HCT116 (cell line): ENCODE measurements at regions of chr17 and their contacts with region 1.

Region 1: GRCh38 chr17:68719431-68719830 is 118.3 kb upstream of the FAM20A start:
- DNase-seq: no peak
- ATAC-seq: no peak
- H3K4me3 ChIP-seq: no peak overlapping the region
- H3K27ac ChIP-seq: no peak overlapping the region
- H3K4me1 ChIP-seq: no peaks in the 10 kb centered on the region
- H3K27me3 ChIP-seq: no peaks in the 10 kb centered on the region
- CTCF ChIP-seq: no peak
- POLR2A ChIP-seq: no peak
- RAD21 ChIP-seq: no peak

Region 2: DNA sequence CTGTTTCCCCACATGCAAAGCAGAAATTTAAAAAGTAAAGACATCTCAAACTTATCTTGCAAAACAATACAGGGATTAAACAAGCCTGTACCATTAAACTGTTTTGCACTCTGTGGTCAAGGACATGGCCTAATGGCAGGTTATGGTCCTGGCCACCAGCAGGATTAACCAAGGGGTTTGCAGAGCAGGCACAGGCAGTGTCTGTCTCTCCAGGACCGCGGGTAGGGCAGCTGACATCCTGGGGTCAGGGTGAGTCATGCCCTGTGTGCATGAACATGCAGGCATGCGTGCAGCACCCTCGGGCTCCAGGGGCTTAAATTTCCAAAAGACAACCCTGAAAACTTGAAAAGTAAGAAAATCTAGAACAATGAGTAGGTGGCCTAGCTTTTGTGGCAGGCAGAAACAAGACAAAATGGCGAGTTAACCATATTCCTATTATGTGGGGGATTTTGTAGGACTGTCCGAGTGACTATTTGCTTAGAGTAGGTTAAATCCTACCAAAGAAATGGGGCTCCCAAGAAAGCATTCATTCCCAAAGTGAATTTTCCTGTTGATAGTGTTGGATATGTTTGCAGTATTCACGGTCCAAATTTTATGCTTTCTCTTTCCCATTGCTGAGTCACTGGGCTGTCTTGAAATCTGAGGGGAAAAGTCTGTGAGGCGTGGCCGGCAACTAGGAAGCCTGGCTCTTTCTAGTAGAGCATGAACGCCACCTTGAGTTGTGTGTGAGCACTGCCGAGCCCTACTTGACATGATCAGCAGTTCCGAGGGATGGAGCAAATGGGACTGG is 40.1 kb after region 1 on chr17:
- CTCF ChIA-PET with region 1: no interaction called
- POLR2A ChIA-PET with region 1: no interaction called
- RAD21 ChIA-PET with region 1: no interaction called
- intact Hi-C with region 1: no loop called
- DNase-seq: peak; percentile 91
- ATAC-seq: peak; percentile 95
- H3K4me3 ChIP-seq: peak overlapping the region; percentile 42 to 53
- H3K27ac ChIP-seq: peak overlapping the region; percentile 64
- H3K4me1 ChIP-seq: peaks cover 8 to 15% of the 10 kb centered on the region in 2 experiments; a peak in 3 of 4 replicates
- H3K27me3 ChIP-seq: no peaks in the 10 kb centered on the region
- CTCF ChIP-seq: peak; percentile 94 to 99 (median 99)
- POLR2A ChIP-seq: no peak
- RAD21 ChIP-seq: peak; percentile 98

Region 3: GRCh38 chr17:69869667-69870066 is 1150.2 kb after region 1 on chr17:
- CTCF ChIA-PET with region 1: no interaction called
- POLR2A ChIA-PET with region 1: no interaction called
- RAD21 ChIA-PET with region 1: no interaction called
- intact Hi-C with region 1: loop called (anchors 5 kb)
- DNase-seq: no peak
- ATAC-seq: no peak
- H3K4me3 ChIP-seq: no peak overlapping the region
- H3K27ac ChIP-seq: no peak overlapping the region
- H3K4me1 ChIP-seq: no peaks in the 10 kb centered on the region; a peak in 1 of 4 replicates
- H3K27me3 ChIP-seq: no peaks in the 10 kb centered on the region
- CTCF ChIP-seq: no peak
- POLR2A ChIP-seq: no peak
- RAD21 ChIP-seq: no peak